ENCODE measurements at regions of chr6 and their contacts with region 1.

Region 1: GRCh38 chr6:16761471-16762267 is 409 bp upstream of the ATXN1 start:
- DNase-seq: peak; percentile 81
- H3K4me3 Mint-ChIP-seq: peak overlapping the region; percentile 97
- H3K27ac Mint-ChIP-seq: peak overlapping the region; percentile 99
- H3K4me1 Mint-ChIP-seq: peaks cover 77% of the 10 kb centered on the region
- H3K27me3 Mint-ChIP-seq: no peaks in the 10 kb centered on the region

Region 2: DNA sequence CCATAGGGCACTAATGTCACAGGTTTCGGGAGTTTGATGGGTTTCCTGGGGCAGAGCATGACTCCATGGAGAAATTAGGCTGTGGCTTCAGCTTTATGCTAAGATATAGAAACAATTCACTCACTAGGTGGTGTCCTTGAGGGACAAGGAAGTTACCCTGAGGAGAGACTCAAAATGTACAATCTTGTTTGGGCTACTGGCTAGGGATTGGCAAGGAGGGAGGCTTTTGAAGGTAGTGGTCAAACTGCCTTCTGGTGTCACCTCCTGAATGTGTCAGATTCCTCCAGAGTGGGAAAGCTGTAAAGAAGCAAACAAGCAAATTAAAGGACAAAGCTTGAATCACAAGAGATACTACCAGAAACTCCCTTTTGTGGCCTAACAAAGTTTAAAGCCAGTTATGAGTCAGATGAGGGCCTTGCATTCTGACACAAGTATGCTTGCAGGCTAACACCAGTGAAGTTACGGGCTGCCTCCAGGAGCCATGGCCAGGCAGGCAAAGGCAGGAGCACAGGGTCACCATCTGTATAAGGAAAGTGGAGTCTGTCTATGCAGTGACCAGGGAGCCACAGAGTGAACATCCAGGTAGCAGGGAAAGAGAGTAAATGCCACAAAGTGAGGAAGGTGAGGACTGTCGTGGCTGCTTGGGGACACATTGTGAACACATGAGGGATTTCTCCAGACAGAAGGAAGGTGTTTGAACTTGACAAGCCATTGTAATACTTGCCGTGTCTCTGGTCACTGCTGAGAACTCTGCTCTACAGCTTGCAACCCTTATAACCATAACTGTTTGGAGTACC is 991.1 kb before region 1 on chr6:
- intact Hi-C with region 1: loop called (anchors 10 kb)
- DNase-seq: no peak
- H3K4me3 Mint-ChIP-seq: no peak overlapping the region
- H3K27ac Mint-ChIP-seq: peak overlapping the region; percentile 90
- H3K4me1 Mint-ChIP-seq: peaks cover 28% of the 10 kb centered on the region
- H3K27me3 Mint-ChIP-seq: no peaks in the 10 kb centered on the region

Region 3: DNA sequence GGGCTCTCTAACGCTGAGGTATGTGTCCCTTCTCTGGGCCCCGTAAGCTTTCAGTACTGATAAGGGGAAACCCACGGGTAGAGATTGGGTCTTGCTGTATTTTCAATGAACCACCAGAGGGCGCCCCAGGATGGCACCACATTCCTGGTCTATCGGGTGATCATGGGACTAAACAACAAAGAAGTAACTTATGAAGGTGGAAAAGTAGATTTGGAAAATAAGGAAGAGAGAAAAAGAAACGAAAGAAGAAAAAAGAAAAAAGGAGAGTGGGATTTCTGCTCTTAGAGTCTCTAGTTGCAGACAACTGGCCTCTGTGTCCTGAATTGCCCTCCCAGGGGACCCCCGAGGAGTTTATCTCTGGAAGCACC is 429.5 kb before region 1 on chr6:
- intact Hi-C with region 1: loop called (anchors 1 kb)
- DNase-seq: peak; percentile 74
- H3K4me3 Mint-ChIP-seq: no peak overlapping the region
- H3K27ac Mint-ChIP-seq: no peak overlapping the region
- H3K4me1 Mint-ChIP-seq: peaks cover 18% of the 10 kb centered on the region
- H3K27me3 Mint-ChIP-seq: no peaks in the 10 kb centered on the region

Region 4: GRCh38 chr6:16514249-16514648 is 247.4 kb before region 1 on chr6:
- intact Hi-C with region 1: loop called (anchors 1 kb)
- DNase-seq: peak; percentile 28
- H3K4me3 Mint-ChIP-seq: peak overlapping the region; percentile 45
- H3K27ac Mint-ChIP-seq: peak overlapping the region; percentile 60
- H3K4me1 Mint-ChIP-seq: peaks cover 78% of the 10 kb centered on the region
- H3K27me3 Mint-ChIP-seq: no peaks in the 10 kb centered on the region

Region 5: DNA sequence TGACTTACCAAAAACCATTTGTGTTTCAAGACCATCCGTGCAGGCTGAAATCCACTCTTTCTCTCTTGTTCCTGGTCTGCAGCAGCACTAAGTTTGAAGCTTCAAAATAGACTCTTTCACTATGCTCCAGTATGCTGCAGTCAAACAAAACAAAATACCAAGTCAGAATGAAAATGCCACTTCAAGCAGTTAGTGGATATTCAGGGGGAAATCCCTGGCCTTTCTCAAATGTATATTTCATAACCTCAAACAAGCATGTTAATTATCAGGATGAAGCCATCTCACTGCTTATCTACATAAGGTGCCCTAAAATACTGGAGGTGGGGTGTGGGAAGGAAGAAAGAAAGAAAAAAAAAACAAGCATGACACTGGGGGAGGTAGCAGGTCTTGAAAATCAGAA is 103.9 kb before region 1 on chr6:
- intact Hi-C with region 1: loop called (anchors 1 kb)
- DNase-seq: no peak
- H3K4me3 Mint-ChIP-seq: peak overlapping the region; percentile 70
- H3K27ac Mint-ChIP-seq: peak overlapping the region; percentile 88
- H3K4me1 Mint-ChIP-seq: peaks cover 64% of the 10 kb centered on the region
- H3K27me3 Mint-ChIP-seq: no peaks in the 10 kb centered on the region

Region 6: DNA sequence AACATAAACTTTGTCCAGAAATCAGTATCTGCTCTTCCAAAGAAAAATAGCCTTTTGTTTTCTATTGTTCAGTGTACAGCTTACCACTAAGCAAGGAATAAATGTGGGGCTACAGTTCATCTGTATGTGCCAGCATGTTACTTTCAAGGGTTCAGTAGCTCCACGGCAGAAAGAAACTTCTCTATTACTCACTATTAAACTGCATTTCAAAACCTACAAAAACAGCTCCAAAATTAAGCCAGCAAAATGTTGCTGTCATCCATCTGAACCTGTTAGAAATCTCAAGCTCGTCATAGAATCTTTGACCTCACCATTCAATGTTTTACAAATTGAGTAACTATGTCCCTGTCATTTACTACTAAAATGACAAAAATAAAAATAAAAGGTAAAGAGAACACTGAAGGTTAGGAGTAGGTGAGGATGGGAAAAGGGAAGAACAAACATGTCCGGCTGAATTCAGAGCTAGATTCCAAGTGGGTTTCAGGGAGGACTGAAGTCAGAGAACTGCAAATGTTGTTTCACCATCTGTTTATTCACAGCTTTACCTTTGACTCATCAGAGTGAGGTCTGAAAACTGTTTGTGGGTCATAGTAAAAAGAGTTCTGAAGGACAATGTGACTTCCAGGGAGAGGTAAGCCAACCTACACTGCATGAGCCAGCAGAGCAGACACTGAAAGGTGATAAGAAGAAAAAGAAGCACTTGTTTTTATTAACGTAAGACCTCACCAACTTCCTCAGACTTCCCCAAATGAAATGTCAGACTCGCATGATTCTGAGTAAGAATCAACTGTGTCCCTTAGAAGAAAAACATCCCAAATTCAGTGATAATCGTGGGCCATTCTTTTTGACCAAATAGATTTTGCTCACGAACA is 62.4 kb before region 1 on chr6:
- intact Hi-C with region 1: loop called (anchors 1 kb)
- DNase-seq: no peak
- H3K4me3 Mint-ChIP-seq: peak overlapping the region; percentile 80
- H3K27ac Mint-ChIP-seq: peak overlapping the region; percentile 98
- H3K4me1 Mint-ChIP-seq: peaks cover 74% of the 10 kb centered on the region
- H3K27me3 Mint-ChIP-seq: no peaks in the 10 kb centered on the region

Region 7: DNA sequence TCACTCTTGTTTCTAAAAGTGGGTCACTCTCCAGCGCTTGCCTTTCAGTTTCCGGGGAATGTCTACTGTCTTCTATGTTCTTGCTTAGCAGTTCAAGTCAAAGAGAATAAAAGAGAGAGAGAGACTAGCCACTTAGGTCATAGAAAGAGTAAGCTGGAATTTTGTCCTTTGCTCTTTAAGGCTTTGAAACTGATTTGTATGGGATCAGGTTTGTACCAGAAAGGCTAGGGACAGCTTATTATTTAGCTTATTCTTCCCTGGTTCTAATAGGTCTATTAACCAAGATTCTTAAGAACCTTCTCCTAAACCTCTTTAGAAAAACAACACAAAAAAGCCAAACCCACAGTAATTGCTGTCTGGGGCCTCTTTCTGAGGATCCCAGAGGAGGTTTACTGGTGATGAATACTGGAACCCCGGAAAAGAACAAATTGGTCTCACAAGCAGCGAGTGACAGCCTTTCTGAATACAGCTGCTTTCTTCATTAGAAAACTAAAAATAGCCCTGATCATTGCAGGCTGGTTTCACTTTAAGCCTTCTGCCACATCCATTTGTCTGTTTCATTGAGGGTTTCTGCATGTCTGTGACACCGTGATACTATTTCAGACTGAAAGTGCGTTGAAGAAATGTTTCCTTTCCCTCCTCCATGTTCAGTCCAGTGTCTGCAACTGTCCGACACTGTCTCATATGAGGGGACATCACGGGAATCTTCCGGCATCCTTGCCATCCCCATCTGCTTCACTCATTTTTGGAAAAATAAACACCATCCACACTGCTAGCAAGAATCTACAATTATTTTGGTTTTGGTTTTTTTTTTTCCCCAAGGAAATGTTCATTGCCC is 74.7 kb after region 1 on chr6:
- intact Hi-C with region 1: loop called (anchors 5 kb)
- DNase-seq: no peak
- H3K4me3 Mint-ChIP-seq: peak overlapping the region; percentile 59
- H3K27ac Mint-ChIP-seq: peak overlapping the region; percentile 73
- H3K4me1 Mint-ChIP-seq: peaks cover 25% of the 10 kb centered on the region
- H3K27me3 Mint-ChIP-seq: peaks cover 8% of the 10 kb centered on the region

Measured in activated T-helper 1 cell treated with anti-CD3 and anti-CD28 coated beads, Interleukin-12 subunit alpha, Interleukin-12 subunit beta, Interleukin-2, Interleukin-4 antibody, amounts not matched to agents 30 ng/mL and 10 ng/mL and 1 ng/mL, durations not matched to agents 14 hours and 24 hours and 36 hours (primary cell).